ENCODE measurements at regions of chr9 and their contacts with region 1.

Region 1: DNA sequence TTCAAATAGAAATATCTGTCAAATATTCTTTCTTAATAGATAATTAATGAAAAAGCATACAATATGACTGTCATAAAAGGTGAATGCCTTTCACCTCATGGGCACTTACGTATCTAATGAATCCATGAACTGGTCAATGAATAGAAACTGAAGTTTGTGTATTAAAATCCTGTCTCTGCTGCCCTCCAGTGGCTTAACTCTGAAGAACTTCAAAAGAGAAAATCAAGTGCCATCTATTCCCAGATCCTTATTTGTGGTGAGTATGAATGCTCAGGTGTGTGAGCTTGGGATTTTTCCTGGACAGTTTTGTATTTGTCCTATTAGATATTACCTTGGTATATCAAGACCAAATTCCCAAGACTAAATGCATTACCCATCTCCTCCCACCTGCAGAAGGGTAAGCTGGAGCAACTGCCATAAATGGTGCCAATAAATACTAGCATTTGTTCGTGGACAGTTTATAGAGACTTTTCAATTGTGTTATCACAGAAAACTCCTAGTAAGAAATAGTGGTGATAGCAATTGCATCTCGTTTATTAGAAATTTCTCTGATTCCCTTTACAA is 44.0 kb upstream of the SVEP1 start:
- DNase-seq: peak; percentile 27
- CTCF ChIP-seq: peak; percentile 59

Region 2: DNA sequence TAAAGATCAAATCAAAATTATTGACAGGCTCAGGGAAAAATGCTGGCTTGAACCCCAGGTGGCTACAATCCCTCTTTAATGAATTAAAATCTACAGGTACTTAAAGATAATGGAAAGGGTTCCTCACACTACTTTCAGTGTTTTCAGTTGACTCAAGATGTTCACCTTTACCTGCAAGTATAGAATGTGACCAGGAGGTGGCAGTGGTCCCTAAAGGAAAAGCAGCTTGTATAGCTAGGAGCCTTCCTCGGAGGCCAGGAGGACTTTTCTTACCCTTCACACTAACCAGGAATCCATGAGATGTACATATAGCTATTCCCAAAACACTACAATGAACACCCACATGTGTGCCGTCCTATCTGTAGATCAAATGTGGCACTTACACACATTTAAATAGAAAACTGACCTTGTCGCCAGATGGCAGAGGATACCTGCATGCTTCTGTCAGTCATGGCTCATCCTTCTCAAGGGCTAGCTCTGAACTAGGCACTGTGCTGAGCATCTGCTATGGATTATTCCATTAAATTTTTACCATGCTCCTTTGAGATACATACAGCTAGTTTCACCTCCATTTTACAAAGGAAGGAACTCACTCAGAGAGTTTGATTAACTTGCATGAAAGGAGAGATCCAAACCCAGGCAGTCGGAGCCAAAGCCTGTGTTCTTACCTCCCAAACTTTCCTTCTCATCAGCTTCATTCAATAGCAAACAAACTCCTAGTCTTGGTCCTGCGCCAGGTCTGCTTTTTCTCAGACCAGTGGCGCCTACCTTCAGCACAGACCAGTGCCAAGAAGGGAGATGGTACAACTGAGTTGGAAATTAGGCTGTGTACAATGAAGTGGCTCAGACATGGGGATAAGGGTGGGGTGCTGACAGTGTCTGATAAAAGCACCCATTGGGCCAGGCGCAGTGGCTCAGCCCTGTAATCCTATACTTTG is 440.1 kb before region 1 on chr9:
- in situ Hi-C with region 1: loop called (anchors 10 kb)
- DNase-seq: peak; percentile 73
- CTCF ChIP-seq: peak; percentile 69

Region 3: GRCh38 chr9:110370316-110370715 is 253.2 kb before region 1 on chr9:
- in situ Hi-C with region 1: no loop called
- DNase-seq: no peak
- CTCF ChIP-seq: no peak

Region 4: GRCh38 chr9:110452227-110452801 is 171.2 kb before region 1 on chr9:
- in situ Hi-C with region 1: loop called (anchors 10 kb)
- DNase-seq: no peak
- CTCF ChIP-seq: peak; percentile 39